ENCODE measurements at regions of chr9 and their contacts with region 1.

Region 1: GRCh38 chr9:124532897-124533296 is 25.7 kb upstream of the NR5A1 start:
- DNase-seq: no peak
- ATAC-seq: peak; percentile 57
- H3K4me3 Mint-ChIP-seq: no peak overlapping the region
- H3K27ac Mint-ChIP-seq: peak overlapping the region; percentile 73; the same call in 1 of the 2 replicates
- H3K4me1 Mint-ChIP-seq: no peaks in the 10 kb centered on the region
- H3K27me3 Mint-ChIP-seq: no peaks in the 10 kb centered on the region
- CTCF ChIP-seq: no peak

Region 2: DNA sequence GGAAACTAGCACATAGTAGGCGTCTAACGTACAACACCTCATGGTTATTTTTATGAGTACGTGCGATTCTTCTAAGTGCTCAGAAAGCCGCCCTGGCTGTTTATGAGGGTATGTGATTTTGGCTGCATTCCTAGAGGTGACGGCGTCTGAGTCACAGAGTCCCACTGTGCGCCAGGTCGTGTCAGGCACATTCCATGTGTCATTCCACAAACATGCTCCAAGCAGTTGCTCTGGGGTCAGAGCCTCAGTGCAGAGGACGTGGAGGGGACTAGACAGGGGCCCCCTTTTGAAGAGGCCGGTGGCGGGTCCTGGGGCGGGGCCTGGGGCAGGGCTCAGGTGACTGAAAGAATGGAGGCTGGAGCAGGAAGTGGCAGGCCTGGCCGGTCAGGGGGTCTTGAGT is 223.2 kb before region 1 on chr9:
- CTCF ChIA-PET with region 1: no interaction called
- POLR2A ChIA-PET with region 1: no interaction called
- DNase-seq: no peak
- ATAC-seq: peak; percentile 23
- H3K4me3 Mint-ChIP-seq: no peak overlapping the region
- H3K27ac Mint-ChIP-seq: no peak overlapping the region
- H3K4me1 Mint-ChIP-seq: peaks cover 5% of the 10 kb centered on the region; the same call in 1 of the 2 replicates
- H3K27me3 Mint-ChIP-seq: no peaks in the 10 kb centered on the region
- CTCF ChIP-seq: no peak

Region 3: DNA sequence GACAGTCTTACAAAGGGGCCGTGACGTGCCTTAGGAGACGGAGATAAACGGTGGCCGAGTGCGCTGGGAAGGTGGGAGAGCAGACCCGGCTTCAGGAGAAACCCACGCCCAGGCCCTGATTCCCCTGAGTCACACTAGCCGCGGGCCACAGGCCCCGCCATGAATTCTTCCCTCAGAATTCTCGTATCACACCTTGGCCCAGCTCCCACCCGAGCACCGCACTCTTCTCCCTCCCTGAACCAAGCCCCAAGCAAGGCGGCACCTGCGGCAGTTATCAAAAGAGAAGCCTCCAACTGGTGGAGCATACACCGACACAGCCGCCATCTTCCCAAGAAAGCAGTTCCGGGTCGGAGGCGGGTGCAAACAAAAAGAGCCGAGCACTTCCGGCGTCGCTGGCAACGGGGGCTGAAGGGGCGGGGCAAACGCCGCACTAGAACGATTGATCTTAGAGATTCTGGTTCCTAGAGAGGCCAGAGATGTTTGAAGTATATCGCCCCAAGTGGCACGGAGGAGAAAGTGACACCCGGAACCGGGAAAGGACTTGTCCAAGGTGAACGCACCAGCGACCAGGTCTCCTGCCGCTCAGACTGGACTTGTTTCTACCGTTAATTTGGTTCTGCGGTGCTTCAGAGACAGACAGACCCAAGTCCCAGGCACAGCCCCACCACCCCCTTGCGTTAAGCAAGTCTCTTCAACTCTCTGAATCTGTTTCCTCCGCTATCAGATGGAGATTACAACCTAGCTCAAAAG is 117.6 kb before region 1 on chr9 and contains the start of gene PSMB7:
- CTCF ChIA-PET with region 1: interaction called, 19 read pairs
- POLR2A ChIA-PET with region 1: no interaction called
- DNase-seq: peak; percentile 97
- ATAC-seq: peak; percentile 65
- H3K4me3 Mint-ChIP-seq: peak within 1 kb of the TSS; percentile 99
- H3K27ac Mint-ChIP-seq: peak within 1 kb of the TSS; percentile 98
- H3K4me1 Mint-ChIP-seq: peaks cover 10% of the 10 kb centered on the region
- H3K27me3 Mint-ChIP-seq: no peaks in the 10 kb centered on the region
- CTCF ChIP-seq: peak; percentile 47
- total RNA-seq, gene PSMB7: 160 to 187 TPM (median 164 TPM) in 3 replicates

Region 4: DNA sequence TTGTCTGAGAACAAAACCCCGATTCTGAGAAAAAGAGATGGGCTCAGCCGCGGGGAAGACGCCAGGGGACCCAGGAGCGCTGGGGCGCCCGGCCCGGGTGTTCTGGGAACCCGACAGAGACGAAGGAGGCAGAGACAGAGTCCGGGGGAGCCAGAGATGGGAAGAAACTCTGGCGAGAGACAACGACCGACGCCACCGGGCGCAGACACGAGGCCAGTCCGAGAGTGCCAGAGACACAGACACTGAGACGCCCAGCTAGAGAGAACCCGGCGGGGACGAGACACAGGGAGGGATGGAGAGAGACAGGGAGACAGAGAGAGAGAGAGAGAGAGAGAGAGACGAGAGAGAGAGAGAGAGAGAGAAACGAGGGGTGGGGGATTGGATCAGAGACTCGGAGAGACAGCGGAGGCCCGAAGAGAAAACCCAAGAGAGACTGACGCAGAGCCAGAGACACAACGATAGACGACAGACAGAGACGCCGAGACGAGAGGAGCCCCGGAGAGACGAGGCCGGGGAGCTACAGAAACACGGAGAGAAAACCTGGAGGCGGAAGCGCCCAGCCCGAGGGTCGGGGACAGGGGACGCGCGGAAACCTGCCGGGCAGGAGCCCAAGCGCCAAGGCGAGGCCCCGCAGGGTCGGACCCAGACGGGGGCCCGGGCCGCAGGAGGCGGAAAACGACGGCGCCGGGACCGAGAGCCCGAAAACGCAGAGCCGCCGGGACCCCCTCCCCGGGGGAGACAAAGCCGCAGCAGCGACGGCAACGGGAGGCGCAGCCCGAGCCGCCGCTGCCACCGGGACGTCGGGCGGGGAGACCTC is 29.0 kb before region 1 on chr9:
- CTCF ChIA-PET with region 1: interaction called, 15 read pairs
- POLR2A ChIA-PET with region 1: no interaction called
- DNase-seq: peak; percentile 35
- ATAC-seq: peak; percentile 3; the same call in 1 of the 2 replicates
- H3K4me3 Mint-ChIP-seq: peak overlapping the region; percentile 85
- H3K27ac Mint-ChIP-seq: no peak overlapping the region
- H3K4me1 Mint-ChIP-seq: peaks cover 13% of the 10 kb centered on the region
- H3K27me3 Mint-ChIP-seq: peaks cover 59% of the 10 kb centered on the region
- CTCF ChIP-seq: no peak

Region 5: GRCh38 chr9:124611106-124611505 is 78.2 kb after region 1 on chr9:
- CTCF ChIA-PET with region 1: interaction called, 12 read pairs
- POLR2A ChIA-PET with region 1: no interaction called
- DNase-seq: no peak
- ATAC-seq: no peak
- H3K4me3 Mint-ChIP-seq: no peak overlapping the region
- H3K27ac Mint-ChIP-seq: no peak overlapping the region; the same call in 1 of the 2 replicates
- H3K4me1 Mint-ChIP-seq: peaks cover 36% of the 10 kb centered on the region
- H3K27me3 Mint-ChIP-seq: no peaks in the 10 kb centered on the region
- CTCF ChIP-seq: no peak

Region 6: DNA sequence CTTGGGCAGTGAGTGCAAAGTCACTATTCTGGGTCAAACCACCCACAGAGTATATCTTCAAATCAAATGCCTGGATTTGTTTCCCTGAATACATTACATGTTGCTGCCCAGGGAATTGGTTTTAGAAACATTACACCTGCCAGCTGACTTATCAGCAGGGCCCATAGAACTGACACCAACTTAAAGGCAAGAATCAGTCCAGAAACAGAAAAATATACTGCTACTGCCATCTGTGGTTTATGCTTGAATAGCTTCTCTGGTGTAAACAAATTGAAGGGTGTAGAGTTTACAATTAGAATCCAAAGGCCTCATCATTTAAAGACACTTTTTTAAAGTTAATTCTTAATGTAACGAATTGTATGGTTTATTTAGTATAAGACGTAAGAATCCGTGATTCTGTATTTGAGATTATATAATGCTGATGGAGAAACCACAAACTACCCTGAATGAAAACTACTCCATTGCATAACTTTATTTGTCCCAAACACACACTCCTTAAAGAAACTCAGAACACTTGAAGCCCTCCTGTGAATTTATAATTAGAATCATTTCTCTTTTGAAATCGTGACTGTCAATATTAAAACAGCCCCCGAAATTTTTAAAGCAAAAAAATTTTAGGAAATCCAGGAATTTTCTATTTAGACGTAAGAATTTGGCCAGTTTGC is 232.0 kb after region 1 on chr9:
- CTCF ChIA-PET with region 1: interaction called, 10 read pairs
- POLR2A ChIA-PET with region 1: interaction called, 3 read pairs
- DNase-seq: no peak
- ATAC-seq: 0 out of 2 replicates have a peak, but pooled peaks have one; percentile 12
- H3K4me3 Mint-ChIP-seq: peak overlapping the region; percentile 47
- H3K27ac Mint-ChIP-seq: 0 out of 2 replicates have a peak overlapping the region, but pooled peaks have one; percentile 46
- H3K4me1 Mint-ChIP-seq: peaks cover 93% of the 10 kb centered on the region
- H3K27me3 Mint-ChIP-seq: no peaks in the 10 kb centered on the region; the same call in none of the 2 replicates
- CTCF ChIP-seq: no peak